Heart left ventricle (tissue), 16 donors: ENCODE measurements at regions of chr7 and their contacts with region 1.

Region 1: GRCh38 chr7:121041516-121042148 is 53.1 kb downstream of the CPED1 start:
- DNase-seq: no peak
- ATAC-seq: peak in 2 of 4 donors; percentile 49 to 65
- H3K4me3 ChIP-seq: peak overlapping the region in 3 of 12 donors; percentile 1 to 5 (median 3)
- H3K27ac ChIP-seq: peak overlapping the region in 10 of 12 donors; percentile 28 to 72 (median 58)
- H3K4me1 ChIP-seq: peaks cover 0 to 63% (median 31%) of the 10 kb centered on the region in 12 donors
- H3K27me3 ChIP-seq: no peaks in the 10 kb centered on the region
- CTCF ChIP-seq: no peak
- POLR2A ChIP-seq: no peak

Region 2: DNA sequence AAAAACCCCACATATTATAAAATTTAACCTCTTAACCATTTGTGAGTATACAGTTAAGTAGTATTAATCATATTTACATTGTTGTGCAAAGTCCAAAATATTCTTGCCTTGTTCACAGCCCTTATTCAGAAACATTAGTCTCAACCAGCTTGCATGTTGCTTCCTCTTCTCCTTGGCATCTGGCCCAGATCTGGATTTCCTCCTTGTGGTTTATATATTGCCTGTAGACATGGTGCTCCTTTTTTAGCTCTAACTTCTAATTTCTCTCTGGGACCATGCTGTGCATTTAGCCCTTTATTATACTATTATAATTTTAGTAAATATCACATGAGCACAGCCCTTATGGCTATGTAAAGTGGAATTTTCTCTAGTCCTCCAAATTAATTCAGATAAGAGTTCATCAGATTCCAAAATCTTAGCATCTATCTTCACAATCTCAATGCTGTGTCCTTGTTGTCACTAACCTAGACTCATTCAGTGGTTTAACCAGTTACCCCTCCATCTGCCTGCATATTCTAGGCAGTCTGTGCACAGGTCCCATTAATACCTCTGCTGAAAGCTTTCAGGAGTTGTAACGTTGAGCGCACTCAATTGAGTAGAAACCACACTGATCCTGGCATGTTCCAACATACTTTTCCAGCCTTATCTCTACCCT is 45.2 kb before region 1 on chr7:
- intact Hi-C with region 1: loop called in 1 of 10 experiments (anchors 5 kb)
- DNase-seq: peak in 4 of 5 donors; percentile 74 to 89 (median 83)
- ATAC-seq: peak in 3 of 4 donors; percentile 60 to 72 (median 68)
- H3K4me3 ChIP-seq: no peak overlapping the region
- H3K27ac ChIP-seq: peak overlapping the region in 7 of 12 donors; percentile 2 to 93 (median 33)
- H3K4me1 ChIP-seq: peaks cover 0 to 94% (median 63%) of the 10 kb centered on the region in 12 donors
- H3K27me3 ChIP-seq: no peaks in the 10 kb centered on the region
- CTCF ChIP-seq: no peak
- POLR2A ChIP-seq: no peak